Panc1 (cell line): ENCODE measurements at regions of chr5 and their contacts with region 1.

Region 1: DNA sequence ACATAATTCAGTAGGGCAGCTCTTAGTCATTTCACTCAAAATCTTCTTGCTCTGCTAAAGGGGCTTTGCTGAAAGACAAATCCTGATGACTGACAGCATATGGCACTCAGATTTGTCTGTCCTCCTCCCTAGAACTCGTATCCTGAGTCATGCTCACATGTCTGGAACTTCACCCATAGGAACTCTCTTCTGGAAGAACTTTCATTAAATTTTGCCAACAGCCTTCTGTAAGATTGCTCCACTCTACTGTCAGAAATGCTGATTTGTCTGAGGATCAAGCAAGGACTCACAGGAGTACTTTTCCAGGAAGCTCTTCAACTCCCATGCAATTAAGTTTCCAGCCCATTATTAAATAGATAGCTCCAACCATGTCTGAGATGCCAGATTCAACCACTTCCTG is 59.8 kb upstream of the SNX2 start:
- DNase-seq: no peak
- ATAC-seq: no peak
- H3K4me3 ChIP-seq: no peak overlapping the region
- H3K27ac ChIP-seq: no peak overlapping the region
- H3K4me1 ChIP-seq: no peaks in the 10 kb centered on the region
- H3K27me3 ChIP-seq: no peaks in the 10 kb centered on the region
- CTCF ChIP-seq: no peak

Region 2: GRCh38 chr5:122697191-122697590 is 17.9 kb before region 1 on chr5:
- CTCF ChIA-PET with region 1: no interaction called
- POLR2A ChIA-PET with region 1: no interaction called
- in situ Hi-C with region 1: no loop called
- intact Hi-C with region 1: no loop called
- DNase-seq: no peak
- ATAC-seq: no peak
- H3K4me3 ChIP-seq: no peak overlapping the region
- H3K27ac ChIP-seq: no peak overlapping the region
- H3K4me1 ChIP-seq: no peaks in the 10 kb centered on the region
- H3K27me3 ChIP-seq: no peaks in the 10 kb centered on the region; the same call in 1 of the 2 replicates
- CTCF ChIP-seq: no peak

Region 3: DNA sequence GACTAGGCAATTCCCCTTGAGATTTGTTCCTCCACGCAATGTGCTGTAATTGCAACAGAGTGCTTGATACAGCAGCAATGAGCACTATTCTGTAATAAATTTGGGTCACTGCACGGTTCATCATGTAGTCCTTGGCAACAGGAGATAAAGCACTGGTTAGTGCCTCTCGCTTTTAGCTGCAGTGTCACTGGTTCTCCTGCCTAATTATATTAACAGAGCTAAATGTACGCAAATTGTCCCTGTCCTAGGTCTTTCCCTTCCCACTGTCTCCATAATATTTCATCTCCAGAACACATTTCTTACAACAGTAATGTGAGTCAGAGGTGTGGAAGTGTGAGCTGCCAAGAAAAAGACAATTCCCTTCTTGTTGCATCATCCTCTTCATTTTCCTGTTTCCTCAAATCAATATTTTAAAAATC is 1478.3 kb after region 1 on chr5:
- CTCF ChIA-PET with region 1: no interaction called
- POLR2A ChIA-PET with region 1: interaction called, 11 read pairs
- in situ Hi-C with region 1: no loop called
- intact Hi-C with region 1: no loop called
- DNase-seq: no peak
- ATAC-seq: no peak
- H3K4me3 ChIP-seq: no peak overlapping the region
- H3K27ac ChIP-seq: no peak overlapping the region; the same call in 1 of the 2 replicates
- H3K4me1 ChIP-seq: no peaks in the 10 kb centered on the region
- H3K27me3 ChIP-seq: no peaks in the 10 kb centered on the region
- CTCF ChIP-seq: no peak